ENCODE measurements at regions of chr12 and their contacts with region 1.

Region 1: GRCh38 chr12:57268264-57268663 is 17.3 kb upstream of the STAC3 start:
- DNase-seq: no peak
- H3K4me3 ChIP-seq: no peak overlapping the region
- H3K4me3 Mint-ChIP-seq: no peak overlapping the region
- H3K27ac ChIP-seq: no peak overlapping the region
- H3K27ac Mint-ChIP-seq: peak overlapping the region in 4 of 8 donors; percentile 5 to 93 (median 27)
- H3K4me1 ChIP-seq: no peaks in the 10 kb centered on the region
- H3K4me1 Mint-ChIP-seq: peaks cover 0 to 4% (median 2%) of the 10 kb centered on the region in 3 donors
- H3K27me3 ChIP-seq: no peaks in the 10 kb centered on the region
- H3K27me3 Mint-ChIP-seq: no peaks in the 10 kb centered on the region

Region 2: DNA sequence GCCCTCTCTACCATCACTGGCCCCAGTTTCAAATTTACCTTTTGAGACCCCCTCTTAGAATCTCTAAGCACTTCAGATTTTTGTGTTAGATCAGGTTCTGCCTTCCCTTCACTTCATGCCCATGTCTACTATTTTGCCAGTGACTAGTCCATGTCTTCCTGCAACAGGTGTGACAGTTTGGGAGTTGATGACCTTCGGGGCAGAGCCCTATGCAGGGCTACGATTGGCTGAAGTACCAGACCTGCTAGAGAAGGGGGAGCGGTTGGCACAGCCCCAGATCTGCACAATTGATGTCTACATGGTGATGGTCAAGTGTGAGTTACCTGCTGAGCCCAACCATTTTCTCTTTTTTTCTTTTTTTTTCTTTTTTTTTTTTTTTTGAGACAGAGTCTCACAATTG is 1169.7 kb before region 1 on chr12:
- CTCF ChIA-PET with region 1: no interaction called
- POLR2A ChIA-PET with region 1: no interaction called
- DNase-seq: no peak
- H3K4me3 ChIP-seq: no peak overlapping the region
- H3K4me3 Mint-ChIP-seq: no peak overlapping the region
- H3K27ac ChIP-seq: no peak overlapping the region
- H3K27ac Mint-ChIP-seq: peak overlapping the region in 2 of 8 donors; percentile 31 to 36
- H3K4me1 ChIP-seq: peaks cover 24% of the 10 kb centered on the region
- H3K4me1 Mint-ChIP-seq: peaks cover 32 to 34% (median 33%) of the 10 kb centered on the region in 3 donors
- H3K27me3 ChIP-seq: no peaks in the 10 kb centered on the region
- H3K27me3 Mint-ChIP-seq: no peaks in the 10 kb centered on the region

Region 3: DNA sequence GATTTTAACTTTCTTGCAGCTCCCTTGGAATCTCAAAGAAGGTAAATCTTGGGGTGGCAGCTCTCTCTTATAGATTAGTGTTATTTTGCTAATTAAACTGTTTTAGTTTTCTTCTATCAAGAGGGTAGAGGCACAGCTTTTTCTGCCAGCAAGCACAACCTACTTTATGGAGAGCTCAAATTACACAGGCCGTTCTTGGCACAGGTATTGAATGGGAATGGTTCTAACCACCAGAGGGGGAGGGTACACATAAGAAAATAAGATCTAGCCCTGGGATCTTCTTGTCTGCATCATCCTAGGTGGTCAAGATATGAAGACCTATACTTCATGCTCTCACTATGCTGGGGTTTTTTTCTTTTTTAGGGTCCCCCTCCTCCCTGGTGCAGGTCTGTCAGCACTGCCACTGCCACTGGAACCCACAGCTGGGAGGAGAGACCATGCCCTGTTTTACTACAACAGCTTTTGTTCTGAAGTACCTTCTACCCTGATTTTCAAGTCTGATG is 31.3 kb after region 1 on chr12:
- CTCF ChIA-PET with region 1: no interaction called
- POLR2A ChIA-PET with region 1: no interaction called
- DNase-seq: no peak
- H3K4me3 ChIP-seq: no peak overlapping the region
- H3K4me3 Mint-ChIP-seq: no peak overlapping the region
- H3K27ac ChIP-seq: no peak overlapping the region
- H3K27ac Mint-ChIP-seq: peak overlapping the region in 1 of 8 donors; percentile 70
- H3K4me1 ChIP-seq: no peaks in the 10 kb centered on the region
- H3K4me1 Mint-ChIP-seq: no peaks in the 10 kb centered on the region
- H3K27me3 ChIP-seq: no peaks in the 10 kb centered on the region
- H3K27me3 Mint-ChIP-seq: no peaks in the 10 kb centered on the region

Region 4: DNA sequence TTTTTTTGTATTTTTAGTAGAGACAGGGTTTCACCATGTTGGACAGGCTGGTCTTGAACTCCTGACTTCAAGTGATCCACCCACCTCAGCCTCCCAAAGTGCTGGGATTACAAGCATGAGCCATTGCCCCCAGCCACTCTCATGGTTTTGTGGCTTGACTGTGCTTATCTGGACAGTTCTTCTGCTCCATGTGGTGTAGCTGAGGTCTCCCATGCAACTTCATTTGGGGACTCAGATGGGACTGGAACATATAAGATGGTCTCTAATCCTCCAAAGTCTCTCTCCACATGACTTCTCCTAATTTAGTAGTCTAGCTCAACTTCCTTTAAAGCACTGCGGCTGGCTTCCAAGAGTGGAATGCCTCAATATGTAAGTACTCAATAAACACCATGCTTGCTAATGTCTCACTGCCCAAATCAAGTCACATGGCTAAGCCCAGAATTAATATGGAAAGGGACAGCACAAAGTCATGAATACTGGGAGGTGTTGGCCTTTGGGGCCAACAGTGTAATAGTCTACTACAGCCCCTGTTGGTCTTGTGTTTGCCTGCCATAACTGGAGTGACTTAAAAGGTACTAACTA is 173.7 kb after region 1 on chr12:
- CTCF ChIA-PET with region 1: no interaction called
- POLR2A ChIA-PET with region 1: no interaction called
- DNase-seq: no peak
- H3K4me3 ChIP-seq: no peak overlapping the region
- H3K4me3 Mint-ChIP-seq: no peak overlapping the region
- H3K27ac ChIP-seq: no peak overlapping the region
- H3K27ac Mint-ChIP-seq: no peak overlapping the region
- H3K4me1 ChIP-seq: no peaks in the 10 kb centered on the region
- H3K4me1 Mint-ChIP-seq: no peaks in the 10 kb centered on the region
- H3K27me3 ChIP-seq: no peaks in the 10 kb centered on the region
- H3K27me3 Mint-ChIP-seq: peaks cover 10 to 11% of the 10 kb centered on the region in 2 donors

Region 5: DNA sequence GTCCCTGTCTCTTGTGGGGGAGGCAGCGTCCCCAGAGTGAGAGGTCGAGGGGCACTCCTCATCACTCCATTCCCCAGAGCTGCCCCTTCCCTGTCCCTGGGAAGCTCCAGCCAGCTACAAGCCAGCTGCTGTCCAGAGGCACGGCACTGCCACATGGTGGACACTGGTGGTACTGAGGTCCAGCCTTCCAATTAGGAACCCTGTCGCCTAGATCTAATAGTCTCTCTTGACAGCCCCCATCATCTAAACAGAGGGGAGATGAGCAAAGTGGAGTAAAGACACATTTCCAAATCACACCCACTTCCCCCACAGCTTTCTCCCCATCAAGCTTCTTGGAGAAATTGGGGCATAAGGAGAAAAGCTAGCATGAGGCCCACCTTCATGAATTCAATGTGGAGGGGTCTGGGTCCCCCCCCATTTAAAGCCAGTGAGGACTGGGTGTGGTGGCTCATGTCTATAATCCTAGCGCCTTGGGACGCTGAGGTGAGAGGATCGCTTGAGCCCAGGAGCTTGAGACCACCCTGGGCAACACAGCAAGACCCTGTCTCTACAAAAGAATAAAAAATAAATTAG is 184.8 kb after region 1 on chr12:
- CTCF ChIA-PET with region 1: interaction called, 15 read pairs
- POLR2A ChIA-PET with region 1: no interaction called
- DNase-seq: no peak
- H3K4me3 ChIP-seq: no peak overlapping the region
- H3K4me3 Mint-ChIP-seq: no peak overlapping the region
- H3K27ac ChIP-seq: no peak overlapping the region
- H3K27ac Mint-ChIP-seq: no peak overlapping the region
- H3K4me1 ChIP-seq: no peaks in the 10 kb centered on the region
- H3K4me1 Mint-ChIP-seq: peaks cover 3 to 8% (median 5%) of the 10 kb centered on the region in 3 donors
- H3K27me3 ChIP-seq: no peaks in the 10 kb centered on the region
- H3K27me3 Mint-ChIP-seq: peaks cover 3% of the 10 kb centered on the region in 2 donors